Activated T-helper 2 cell treated with anti-CD3 and anti-CD28 coated beads, Interferon-gamma antibody, Interleukin-2, Interleukin-4, amounts not matched to agents 10 μg/mL and 5 μg/mL and 100 μg/mL, durations not matched to agents 14 hours and 24 hours and 36 hours (primary cell): ENCODE measurements at regions of chr16 and their contacts with region 1.

Region 1: DNA sequence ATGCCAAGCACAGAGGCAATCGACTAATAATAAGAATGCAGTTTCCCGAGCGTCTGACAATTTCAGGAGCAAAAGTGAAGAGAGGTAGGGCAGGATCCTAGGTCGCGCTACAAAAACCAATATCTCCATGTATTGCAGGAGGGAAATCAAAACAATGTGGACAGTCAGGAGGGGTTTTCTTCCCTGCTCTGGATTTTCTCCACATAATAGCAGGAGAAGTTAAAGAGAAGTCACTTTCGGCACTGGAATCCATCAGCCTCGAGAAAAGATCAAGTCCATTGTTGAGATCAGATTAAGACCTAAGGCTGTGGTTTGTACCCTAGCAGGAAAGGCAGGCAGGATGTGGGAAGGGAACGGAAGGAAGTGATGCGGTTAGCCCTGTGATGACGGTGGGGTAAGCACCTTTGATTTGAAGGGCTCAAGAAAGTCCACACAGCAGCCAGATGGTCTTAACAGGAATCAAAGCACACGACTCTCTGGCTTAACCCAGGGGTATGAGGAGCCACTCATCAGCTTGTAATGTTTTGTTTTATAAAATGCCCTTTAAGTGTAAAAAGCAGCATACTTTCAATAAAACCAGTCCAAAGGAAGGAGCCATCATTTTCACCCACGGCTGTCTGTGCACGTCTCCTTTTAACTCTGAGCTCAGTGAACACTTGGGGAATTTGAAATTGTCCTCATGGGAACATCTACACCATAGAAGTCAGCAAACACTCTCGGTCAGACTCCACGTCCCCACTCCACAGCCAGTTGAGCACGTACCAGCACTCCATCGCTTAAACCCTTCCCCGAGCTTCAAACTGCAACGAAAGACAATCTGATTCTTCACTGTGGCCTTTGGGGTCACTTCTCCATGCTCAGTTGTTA is 15.8 kb upstream of the AKTIP start:
- DNase-seq: peak; percentile 83
- H3K4me3 Mint-ChIP-seq: peak overlapping the region; percentile 66
- H3K27ac Mint-ChIP-seq: peak overlapping the region; percentile 62
- H3K4me1 Mint-ChIP-seq: peaks cover 47% of the 10 kb centered on the region
- H3K27me3 Mint-ChIP-seq: no peaks in the 10 kb centered on the region

Region 2: GRCh38 chr16:53503270-53503923 is 15.4 kb before region 1 on chr16:
- intact Hi-C with region 1: no loop called
- DNase-seq: peak; percentile 100
- H3K4me3 Mint-ChIP-seq: peak overlapping the region; percentile 88
- H3K27ac Mint-ChIP-seq: peak overlapping the region; percentile 91
- H3K4me1 Mint-ChIP-seq: peaks cover 45% of the 10 kb centered on the region
- H3K27me3 Mint-ChIP-seq: no peaks in the 10 kb centered on the region

Region 3: DNA sequence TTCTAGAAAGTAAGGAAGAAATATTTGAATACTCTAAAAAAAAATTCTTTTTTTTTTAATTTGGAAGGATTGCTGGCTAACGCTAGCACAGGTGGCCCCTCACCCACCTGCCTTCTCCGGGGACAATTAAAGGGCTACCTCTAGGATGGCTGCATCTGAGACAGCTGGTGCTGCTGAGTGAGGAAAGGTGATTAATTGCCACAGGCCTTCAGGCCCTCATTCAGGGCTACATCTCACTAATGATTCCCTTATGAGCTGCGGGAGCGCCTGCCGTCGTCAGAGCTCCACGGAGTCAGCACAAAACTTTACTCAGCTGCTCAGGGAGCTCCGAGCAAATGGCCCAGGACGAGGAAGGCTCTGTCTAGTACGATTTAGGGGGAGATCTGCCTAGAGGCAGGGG is 11.3 kb after region 1 on chr16:
- intact Hi-C with region 1: loop called (anchors 1 kb)
- DNase-seq: no peak
- H3K4me3 Mint-ChIP-seq: no peak overlapping the region
- H3K27ac Mint-ChIP-seq: no peak overlapping the region
- H3K4me1 Mint-ChIP-seq: peaks cover 12% of the 10 kb centered on the region
- H3K27me3 Mint-ChIP-seq: no peaks in the 10 kb centered on the region

Region 4: GRCh38 chr16:53549970-53550690 is 31.3 kb after region 1 on chr16:
- intact Hi-C with region 1: loop called (anchors 1 kb)
- DNase-seq: peak; percentile 17
- H3K4me3 Mint-ChIP-seq: no peak overlapping the region
- H3K27ac Mint-ChIP-seq: no peak overlapping the region
- H3K4me1 Mint-ChIP-seq: peaks cover 34% of the 10 kb centered on the region
- H3K27me3 Mint-ChIP-seq: peaks cover 26% of the 10 kb centered on the region